ENCODE measurements at regions of chr10 and their contacts with region 1.

Region 1: GRCh38 chr10:132028706-132029105 is 37.0 kb upstream of the JAKMIP3 start:
- DNase-seq: no peak
- ATAC-seq: no peak
- H3K4me3 ChIP-seq: no peak overlapping the region
- H3K4me3 Mint-ChIP-seq: no peak overlapping the region
- H3K27ac ChIP-seq: no peak overlapping the region
- H3K27ac Mint-ChIP-seq: no peak overlapping the region
- H3K4me1 ChIP-seq: no peaks in the 10 kb centered on the region
- H3K4me1 Mint-ChIP-seq: no peaks in the 10 kb centered on the region
- H3K27me3 ChIP-seq: peaks cover 8 to 43% of the 10 kb centered on the region in 2 experiments
- H3K27me3 Mint-ChIP-seq: peaks cover 84% of the 10 kb centered on the region
- CTCF ChIP-seq: no peak

Region 2: DNA sequence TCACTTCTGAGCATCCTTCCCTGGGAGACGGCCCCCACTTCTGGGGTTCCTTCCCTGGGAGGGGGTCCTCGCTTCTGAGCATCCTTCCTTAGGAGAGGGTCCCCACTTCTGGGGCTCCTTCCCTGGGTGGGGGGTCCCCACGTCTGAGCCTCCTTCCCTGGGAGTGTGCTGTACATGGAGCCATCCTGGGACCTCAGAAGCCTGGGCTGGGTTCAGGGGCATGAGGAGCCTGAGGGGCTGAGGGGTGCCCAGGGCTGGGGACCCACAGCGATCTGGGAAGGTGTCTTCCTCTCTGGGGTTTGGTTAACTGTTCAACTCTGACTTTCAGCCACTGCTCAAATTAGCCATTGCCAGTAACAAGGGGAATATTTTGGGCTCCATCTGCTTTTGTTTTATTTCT is 10.9 kb before region 1 on chr10:
- CTCF ChIA-PET with region 1: no interaction called
- POLR2A ChIA-PET with region 1: no interaction called
- intact Hi-C with region 1: loop called in 1 of 2 experiments (anchors 1 kb)
- DNase-seq: no peak
- ATAC-seq: no peak
- H3K4me3 ChIP-seq: no peak overlapping the region
- H3K4me3 Mint-ChIP-seq: no peak overlapping the region
- H3K27ac ChIP-seq: no peak overlapping the region
- H3K27ac Mint-ChIP-seq: no peak overlapping the region
- H3K4me1 ChIP-seq: peaks cover under 1% of the 10 kb centered on the region
- H3K4me1 Mint-ChIP-seq: peaks cover under 1% of the 10 kb centered on the region
- H3K27me3 ChIP-seq: no peaks in the 10 kb centered on the region
- H3K27me3 Mint-ChIP-seq: peaks cover under 1% of the 10 kb centered on the region
- CTCF ChIP-seq: no peak

Region 3: GRCh38 chr10:132054564-132054963 is 25.9 kb after region 1 on chr10:
- CTCF ChIA-PET with region 1: no interaction called
- POLR2A ChIA-PET with region 1: no interaction called
- intact Hi-C with region 1: no loop called
- DNase-seq: no peak
- ATAC-seq: no peak
- H3K4me3 ChIP-seq: no peak overlapping the region
- H3K4me3 Mint-ChIP-seq: no peak overlapping the region
- H3K27ac ChIP-seq: no peak overlapping the region
- H3K27ac Mint-ChIP-seq: no peak overlapping the region
- H3K4me1 ChIP-seq: no peaks in the 10 kb centered on the region
- H3K4me1 Mint-ChIP-seq: no peaks in the 10 kb centered on the region
- H3K27me3 ChIP-seq: peaks cover 0 to 7% of the 10 kb centered on the region in 2 experiments
- H3K27me3 Mint-ChIP-seq: peaks cover 26% of the 10 kb centered on the region
- CTCF ChIP-seq: no peak

Region 4: DNA sequence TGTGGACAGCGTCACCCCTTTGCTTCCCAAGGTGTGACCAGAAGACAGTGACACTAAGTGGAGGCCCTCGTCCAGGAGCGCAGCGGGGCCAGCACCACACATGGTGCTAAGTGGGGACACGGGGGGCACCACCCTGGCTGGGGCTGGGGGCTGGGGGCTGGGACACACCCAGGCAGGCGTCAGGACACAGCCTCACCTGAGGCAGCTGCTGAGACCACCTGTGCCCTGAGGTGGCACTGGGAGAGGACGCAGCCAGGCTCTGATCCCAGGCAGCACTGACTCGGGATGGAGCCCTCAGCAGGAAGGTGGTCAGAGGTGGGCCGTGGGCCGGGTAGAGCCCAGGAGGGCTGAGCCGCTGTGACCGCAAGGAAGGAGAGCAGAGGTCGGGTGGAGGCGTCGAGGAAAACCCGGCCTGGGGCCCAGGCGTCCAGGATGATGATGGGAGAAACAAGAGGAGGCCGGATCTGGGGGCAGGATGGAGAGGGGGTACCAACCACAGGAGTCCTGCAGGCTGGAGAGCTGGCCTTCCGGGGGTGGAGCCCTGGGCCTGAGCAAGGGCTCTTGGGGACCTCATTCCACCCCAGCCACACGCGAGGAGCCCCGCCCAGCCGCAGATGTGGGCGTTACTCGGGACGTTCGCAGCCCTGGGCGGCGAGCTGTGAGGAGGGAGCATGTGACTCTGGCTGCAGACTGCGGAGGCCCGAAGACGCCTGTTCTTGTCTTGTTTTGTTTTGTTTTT is 325.8 kb after region 1 on chr10:
- CTCF ChIA-PET with region 1: no interaction called
- POLR2A ChIA-PET with region 1: no interaction called
- intact Hi-C with region 1: no loop called
- DNase-seq: no peak
- ATAC-seq: no peak
- H3K4me3 ChIP-seq: no peak overlapping the region
- H3K4me3 Mint-ChIP-seq: no peak overlapping the region
- H3K27ac ChIP-seq: no peak overlapping the region
- H3K27ac Mint-ChIP-seq: no peak overlapping the region
- H3K4me1 ChIP-seq: peaks cover 5% of the 10 kb centered on the region
- H3K4me1 Mint-ChIP-seq: no peaks in the 10 kb centered on the region
- H3K27me3 ChIP-seq: no peaks in the 10 kb centered on the region
- H3K27me3 Mint-ChIP-seq: no peaks in the 10 kb centered on the region
- CTCF ChIP-seq: no peak

Region 5: GRCh38 chr10:132577350-132578003 is 548.8 kb after region 1 on chr10:
- CTCF ChIA-PET with region 1: no interaction called
- POLR2A ChIA-PET with region 1: no interaction called
- intact Hi-C with region 1: no loop called
- DNase-seq: no peak
- ATAC-seq: no peak
- H3K4me3 ChIP-seq: no peak overlapping the region
- H3K4me3 Mint-ChIP-seq: no peak overlapping the region
- H3K27ac ChIP-seq: no peak overlapping the region
- H3K27ac Mint-ChIP-seq: no peak overlapping the region
- H3K4me1 ChIP-seq: peaks cover 33% of the 10 kb centered on the region
- H3K4me1 Mint-ChIP-seq: peaks cover 65% of the 10 kb centered on the region
- H3K27me3 ChIP-seq: no peaks in the 10 kb centered on the region
- H3K27me3 Mint-ChIP-seq: no peaks in the 10 kb centered on the region
- CTCF ChIP-seq: no peak